AG04449 (cell line): ENCODE measurements at regions of chr10 and their contacts with region 1.

Region 1: DNA sequence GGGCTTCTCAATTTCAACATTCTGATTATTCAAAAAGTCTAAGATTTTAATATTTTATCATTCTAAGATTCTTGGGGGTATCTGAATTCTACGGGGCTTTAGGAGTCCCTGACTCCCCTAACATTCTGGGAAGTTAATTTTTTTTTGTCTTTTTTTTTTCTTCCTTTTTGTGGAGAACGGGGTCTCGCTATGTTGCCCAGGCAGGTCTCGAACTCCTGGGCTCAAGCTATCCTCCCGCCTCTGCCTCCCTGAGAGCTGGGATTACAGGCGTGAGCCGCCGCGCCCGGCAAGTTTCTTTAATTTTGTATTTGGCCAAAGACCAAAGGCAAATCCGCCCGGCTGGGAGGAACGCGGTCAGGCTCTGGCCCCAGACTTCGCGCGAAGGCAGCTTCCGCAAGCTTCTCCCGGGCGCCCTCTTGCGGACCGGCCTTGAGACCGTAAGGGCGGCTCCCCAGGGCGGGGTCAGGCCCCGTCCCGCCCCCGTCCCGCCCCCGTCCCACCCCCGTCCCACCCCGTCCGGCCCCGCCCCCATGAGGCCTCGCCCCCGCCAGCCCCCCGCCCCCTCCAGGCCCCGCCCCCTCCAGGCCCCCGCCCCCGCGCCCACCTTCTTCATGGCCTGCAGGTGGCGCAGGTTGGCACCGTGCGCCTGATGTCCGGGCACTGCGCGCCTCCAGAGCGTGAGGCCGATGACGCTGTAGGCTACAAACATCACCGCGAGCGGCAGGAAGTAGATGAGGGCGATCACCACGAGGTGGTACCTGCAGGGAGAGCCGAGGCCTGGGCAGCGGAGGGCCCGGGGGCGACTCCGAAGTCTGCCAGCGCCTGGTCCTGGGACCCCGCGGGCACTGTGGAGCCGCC is 8.2 kb downstream of the TACR2 start:
- DNase-seq: peak; percentile 59
- H3K4me3 ChIP-seq: peak overlapping the region; percentile 51
- CTCF ChIP-seq: peak; percentile 88

Region 2: DNA sequence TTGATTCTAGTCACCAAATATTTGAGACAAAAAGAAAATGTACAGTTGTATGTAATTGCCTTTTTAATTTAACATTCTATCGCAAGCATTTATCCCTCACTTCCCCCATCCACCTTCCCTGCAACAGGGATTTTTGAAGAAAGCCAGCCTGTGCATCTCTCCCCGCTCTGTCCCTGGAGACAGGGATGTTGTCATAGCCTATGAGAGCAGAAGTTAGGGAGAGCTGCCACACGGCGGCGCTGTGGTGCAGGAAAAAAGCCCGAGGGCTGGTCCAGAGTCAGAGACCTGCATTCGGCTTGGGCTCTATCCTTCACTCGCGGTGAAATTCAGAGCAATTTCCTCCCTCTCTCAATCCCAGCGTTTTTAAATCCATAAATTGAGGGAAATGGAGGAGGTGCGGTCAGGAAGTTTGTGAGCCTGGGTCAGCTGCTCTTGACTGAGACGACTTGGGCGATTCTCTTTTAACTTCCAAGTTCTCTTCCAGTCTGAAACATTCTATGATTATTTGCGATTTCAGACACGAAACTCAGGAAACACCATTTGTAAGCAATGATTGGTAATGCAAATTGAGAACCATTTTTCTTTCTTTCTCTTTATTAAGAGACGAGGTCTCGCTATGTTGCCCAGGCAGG is 170.9 kb before region 1 on chr10:
- CTCF ChIA-PET with region 1: interaction called, 81 read pairs
- POLR2A ChIA-PET with region 1: no interaction called
- DNase-seq: no peak
- H3K4me3 ChIP-seq: no peak overlapping the region
- CTCF ChIP-seq: peak; percentile 78

Region 3: GRCh38 chr10:69392481-69393000 is 16.0 kb before region 1 on chr10:
- CTCF ChIA-PET with region 1: interaction called, 40 read pairs
- POLR2A ChIA-PET with region 1: no interaction called
- DNase-seq: no peak
- H3K4me3 ChIP-seq: no peak overlapping the region
- CTCF ChIP-seq: peak; percentile 99

Region 4: DNA sequence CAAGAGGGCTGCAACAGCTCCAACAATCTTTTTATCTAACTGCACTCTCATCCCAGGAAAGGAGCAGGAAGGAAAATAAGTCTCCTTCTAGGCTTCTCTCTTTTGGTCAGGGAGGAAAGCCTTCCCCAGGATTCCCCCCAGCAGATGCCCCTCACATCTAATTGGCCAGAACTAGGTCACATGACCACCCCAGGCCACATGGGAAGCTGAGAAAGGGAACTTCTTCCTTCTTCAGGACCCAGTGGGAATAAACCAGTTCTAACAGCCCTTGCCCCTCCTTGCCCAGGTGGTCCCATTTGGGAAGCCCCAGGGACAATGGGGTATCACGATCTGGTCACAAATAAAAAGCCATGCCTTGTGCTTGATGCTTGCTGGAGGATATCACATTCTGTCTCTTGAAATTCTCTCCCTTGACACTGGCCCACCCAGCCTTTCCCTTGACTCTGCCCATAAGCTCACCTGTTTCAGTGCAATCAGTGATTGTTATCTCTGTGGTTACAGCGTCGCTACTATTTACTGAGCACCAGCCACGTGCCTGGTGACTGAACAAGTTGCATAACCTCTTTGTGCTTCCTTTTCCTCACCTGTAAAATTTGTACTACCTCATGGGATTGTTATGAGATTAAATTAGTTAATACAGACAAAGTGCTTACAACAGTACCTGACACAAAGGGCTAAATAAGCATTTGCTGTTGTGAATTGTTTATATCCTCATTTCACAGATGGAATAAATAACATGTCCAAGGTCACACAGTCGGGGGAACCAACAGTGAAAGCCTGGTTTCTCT is 17.2 kb after region 1 on chr10:
- CTCF ChIA-PET with region 1: interaction called, 11 read pairs
- POLR2A ChIA-PET with region 1: no interaction called
- DNase-seq: no peak
- H3K4me3 ChIP-seq: no peak overlapping the region
- CTCF ChIP-seq: no peak